K562 (cell line): ENCODE measurements at regions of chr10 and their contacts with region 1.

Region 1: DNA sequence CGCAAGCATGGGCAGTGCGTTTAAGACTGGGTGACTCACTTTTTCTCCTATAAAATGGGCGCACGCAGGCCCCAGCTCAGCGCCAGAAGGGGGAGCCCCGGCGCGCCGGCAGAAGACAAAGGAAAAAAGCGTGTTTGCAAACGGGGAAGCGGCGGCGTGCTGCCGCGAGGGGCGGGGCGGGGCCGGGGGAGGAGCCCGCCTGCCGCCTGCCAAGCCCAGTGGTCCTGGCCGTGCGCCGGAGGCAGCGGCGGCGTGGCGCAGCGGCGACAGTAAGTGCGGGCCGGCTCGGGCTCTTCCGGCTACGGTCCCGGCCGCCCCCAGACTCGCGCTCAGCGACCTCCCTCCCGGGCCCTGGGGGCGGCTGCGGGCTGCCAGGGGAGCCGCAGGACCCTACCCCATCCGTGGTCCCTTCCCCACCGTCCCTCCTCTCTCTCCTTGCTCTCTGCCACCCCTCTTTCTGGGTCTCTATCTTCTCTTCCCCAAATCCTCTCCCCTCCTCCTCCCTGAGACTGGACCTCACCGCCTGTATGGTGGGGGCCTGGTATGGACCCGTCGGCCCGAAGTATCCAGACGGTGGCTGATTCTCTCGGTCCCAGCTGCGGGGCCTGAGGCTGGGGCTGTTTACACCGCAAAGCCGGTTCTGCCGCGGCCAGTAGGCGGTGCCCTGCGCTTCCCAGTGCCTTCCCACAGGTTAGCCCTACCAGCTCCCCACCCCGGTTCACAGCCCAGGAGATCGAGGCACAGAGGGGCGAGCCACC is at the start of gene SLC29A3:
- DNase-seq: peak; percentile 92 to 96 (median 94)
- ATAC-seq: peak; percentile 96
- H3K4me3 ChIP-seq: peak within 1 kb of the TSS; percentile 75
- H3K27ac ChIP-seq: peak within 1 kb of the TSS; percentile 62
- H3K4me1 ChIP-seq: peaks cover 10 to 23% of the 10 kb centered on the region in 2 experiments; a peak in 4 of 5 replicates
- H3K27me3 ChIP-seq: no peaks in the 10 kb centered on the region
- CTCF ChIP-seq: peak; percentile 90 to 96 (median 94)
- EP300 ChIP-seq: no peak
- POLR2A ChIP-seq: peak; percentile 80
- RAD21 ChIP-seq: peak; percentile 84 to 91
- polyA plus RNA-seq, gene SLC29A3: 6.3 to 10.3 TPM

Region 2: DNA sequence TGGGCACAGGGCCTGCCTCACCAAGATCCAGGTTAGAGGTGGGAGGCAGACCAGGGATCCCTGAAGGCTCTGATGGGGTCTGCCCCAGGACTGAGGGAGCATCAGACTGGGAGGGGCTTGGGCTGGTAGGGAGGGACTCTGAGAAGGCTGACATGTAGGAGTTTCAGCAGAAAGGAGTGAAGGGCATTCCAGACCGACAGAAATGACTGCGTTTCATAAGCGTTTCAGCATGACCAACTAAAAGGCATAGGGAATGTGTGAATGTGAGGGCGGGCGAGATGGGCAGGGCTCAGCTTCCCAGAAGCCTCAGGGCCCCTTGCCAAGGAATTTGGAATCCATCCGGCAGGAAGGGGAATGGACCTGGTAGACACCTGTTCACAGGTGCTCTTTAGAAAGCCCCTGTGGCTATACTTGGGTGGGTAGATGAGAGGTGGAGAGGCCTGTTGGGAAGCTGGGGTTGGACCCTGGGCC is 25.1 kb before region 1 on chr10:
- CTCF ChIA-PET with region 1: no interaction called
- POLR2A ChIA-PET with region 1: no interaction called
- in situ Hi-C with region 1: no loop called
- intact Hi-C with region 1: no loop called
- DNase-seq: no peak
- ATAC-seq: no peak
- H3K4me3 ChIP-seq: no peak overlapping the region
- H3K27ac ChIP-seq: no peak overlapping the region
- H3K4me1 ChIP-seq: peaks cover 3 to 17% of the 10 kb centered on the region in 2 experiments; a peak in 4 of 5 replicates
- H3K27me3 ChIP-seq: peaks cover 0 to 26% of the 10 kb centered on the region in 2 experiments; a peak in 2 of 5 replicates
- CTCF ChIP-seq: no peak
- EP300 ChIP-seq: no peak
- POLR2A ChIP-seq: no peak
- RAD21 ChIP-seq: no peak

Region 3: GRCh38 chr10:71333129-71333887 is 14.1 kb after region 1 on chr10:
- CTCF ChIA-PET with region 1: no interaction called
- POLR2A ChIA-PET with region 1: interaction called, 15 read pairs
- in situ Hi-C with region 1: no loop called
- intact Hi-C with region 1: no loop called
- DNase-seq: no peak
- ATAC-seq: no peak; the same call in 1 of the 3 replicates
- H3K4me3 ChIP-seq: no peak overlapping the region
- H3K27ac ChIP-seq: no peak overlapping the region
- H3K4me1 ChIP-seq: peaks cover 0 to 18% of the 10 kb centered on the region in 2 experiments; a peak in 3 of 5 replicates
- H3K27me3 ChIP-seq: no peaks in the 10 kb centered on the region
- CTCF ChIP-seq: no peak
- EP300 ChIP-seq: no peak
- POLR2A ChIP-seq: no peak
- RAD21 ChIP-seq: no peak

Region 4: DNA sequence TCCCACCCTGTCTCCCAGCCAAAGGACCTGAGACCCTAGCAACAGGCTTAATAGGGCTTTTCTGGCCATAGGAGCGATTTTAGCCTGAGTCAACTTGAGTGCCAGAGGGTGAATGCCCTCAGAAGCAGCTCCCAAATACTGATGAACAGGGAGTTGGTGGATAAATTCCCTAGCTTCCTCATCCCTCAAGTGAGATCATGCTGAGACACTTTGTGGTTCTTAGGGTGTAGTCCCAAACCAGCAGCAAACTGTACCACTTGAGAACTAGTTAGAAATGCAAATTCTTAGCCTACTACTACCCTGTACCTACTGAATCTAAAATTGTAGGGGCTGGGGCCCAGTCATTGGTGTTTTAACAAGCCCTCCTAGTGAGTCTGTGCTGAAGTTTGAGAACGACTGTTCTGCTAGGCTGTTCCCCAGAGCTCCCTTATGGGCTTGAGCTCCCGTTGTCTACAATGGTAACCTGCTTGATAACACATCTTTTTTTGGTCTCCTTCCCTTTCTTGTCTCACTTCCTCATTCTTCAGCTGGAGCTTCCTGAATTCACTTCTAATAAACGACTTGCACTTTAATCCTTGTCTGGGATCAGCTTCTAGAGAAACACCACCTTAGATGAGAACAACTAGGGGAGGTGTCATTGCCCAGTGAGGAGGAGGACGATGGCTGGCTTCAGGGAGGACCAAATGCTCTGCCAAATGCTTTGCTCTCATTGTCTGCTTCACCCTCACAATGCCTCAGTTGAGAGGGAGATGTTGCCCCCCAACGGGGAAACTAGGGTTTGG is 59.3 kb after region 1 on chr10:
- CTCF ChIA-PET with region 1: interaction called, 5 read pairs
- POLR2A ChIA-PET with region 1: interaction called, 5 read pairs
- in situ Hi-C with region 1: no loop called
- intact Hi-C with region 1: loop called (anchors 1 kb)
- DNase-seq: peak in 1 of 4 experiments; percentile 32
- ATAC-seq: no peak
- H3K4me3 ChIP-seq: no peak overlapping the region
- H3K27ac ChIP-seq: no peak overlapping the region
- H3K4me1 ChIP-seq: peaks cover 8 to 19% of the 10 kb centered on the region in 2 experiments
- H3K27me3 ChIP-seq: peaks cover 6 to 11% of the 10 kb centered on the region in 2 experiments; a peak in 4 of 5 replicates
- CTCF ChIP-seq: peak in 2 of 3 experiments; percentile 34 to 49; a peak in 3 of 6 replicates
- EP300 ChIP-seq: no peak
- POLR2A ChIP-seq: no peak
- RAD21 ChIP-seq: peak; percentile 28 to 67

Region 5: DNA sequence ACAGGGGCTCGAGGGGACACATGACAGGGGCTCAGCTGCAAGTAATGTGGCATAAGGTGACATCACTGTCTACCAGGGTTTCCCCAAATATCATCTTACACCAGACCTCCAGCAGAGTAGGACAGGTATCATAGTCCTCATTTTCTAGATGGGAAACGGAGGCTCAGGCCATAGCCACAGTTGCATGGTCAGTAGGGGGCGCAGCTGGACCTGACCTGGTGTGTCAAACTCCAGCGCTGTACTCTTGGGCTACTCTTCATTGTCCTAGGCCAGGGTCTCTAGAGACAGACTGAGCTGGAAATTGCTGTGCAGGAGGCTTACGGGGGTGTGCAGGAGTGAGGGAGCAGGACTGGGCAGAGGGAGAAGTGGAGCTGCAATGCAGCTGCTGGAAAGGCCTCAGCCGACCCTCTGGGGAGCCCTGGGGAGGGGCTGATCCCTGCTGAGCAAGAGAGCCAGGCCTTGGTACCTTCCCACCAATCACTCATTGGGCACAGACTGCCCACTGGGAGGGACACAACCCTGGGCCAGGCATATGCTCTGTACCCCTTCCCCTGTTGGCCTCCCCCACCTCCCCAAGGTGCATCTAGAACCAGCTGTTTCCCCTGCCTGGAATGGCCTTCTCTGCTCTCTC is 167.4 kb after region 1 on chr10:
- CTCF ChIA-PET with region 1: no interaction called
- POLR2A ChIA-PET with region 1: no interaction called
- in situ Hi-C with region 1: no loop called
- intact Hi-C with region 1: loop called (anchors 5 kb)
- DNase-seq: peak; percentile 66 to 82 (median 73)
- ATAC-seq: peak; percentile 98
- H3K4me3 ChIP-seq: no peak overlapping the region
- H3K27ac ChIP-seq: no peak overlapping the region
- H3K4me1 ChIP-seq: no peaks in the 10 kb centered on the region
- H3K27me3 ChIP-seq: peaks cover 24 to 39% of the 10 kb centered on the region in 2 experiments; a peak in 4 of 5 replicates
- CTCF ChIP-seq: peak; percentile 85 to 93 (median 91)
- EP300 ChIP-seq: no peak
- POLR2A ChIP-seq: no peak
- RAD21 ChIP-seq: peak; percentile 51 to 87